ENCODE measurements at regions of chr19 and their contacts with region 1.

Region 1: DNA sequence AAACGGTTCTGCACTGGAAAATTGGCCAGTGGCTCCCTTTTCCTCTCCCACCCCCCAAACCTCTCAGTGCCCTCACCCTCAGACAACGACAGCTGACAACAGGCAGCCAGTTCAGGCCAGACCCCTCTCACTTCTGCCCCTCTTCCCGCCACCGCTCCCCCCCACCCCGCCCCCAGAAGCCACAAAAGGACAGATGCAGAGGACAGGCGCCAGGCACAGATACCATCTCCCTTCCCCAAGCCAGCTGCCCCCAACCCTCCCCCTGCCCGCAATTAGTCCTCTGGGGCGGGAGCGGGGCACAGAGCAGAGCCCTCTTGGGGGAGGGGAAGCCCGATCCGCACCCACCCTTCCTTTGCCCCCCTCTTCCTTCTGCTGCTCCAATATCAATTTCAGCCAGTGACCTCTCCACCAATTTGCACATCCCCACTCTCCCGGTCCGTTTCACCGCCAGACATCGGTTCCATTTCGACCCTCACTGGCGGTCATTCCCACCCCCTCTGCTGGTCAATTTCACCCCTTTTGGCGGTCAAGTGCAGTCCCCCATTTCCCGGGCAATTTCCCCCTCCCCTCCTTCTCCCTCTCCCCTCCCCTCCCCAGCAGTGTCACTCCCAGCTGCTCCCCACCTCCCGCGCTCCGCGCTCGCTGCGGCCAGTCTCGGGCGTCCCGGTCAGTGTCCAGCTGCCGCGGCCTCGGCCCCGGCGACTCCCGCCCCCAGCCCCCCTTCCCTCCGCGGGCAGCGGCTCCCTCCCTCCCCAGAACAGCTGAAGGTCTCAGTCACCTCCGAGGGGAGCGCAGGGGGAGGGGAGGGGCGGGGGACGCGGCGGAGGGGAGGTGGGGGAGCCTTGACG is at the start of gene SHD:
- DNase-seq: no peak
- H3K4me3 ChIP-seq: peak within 1 kb of the TSS in 3 of 4 donors; percentile 1 to 43 (median 28)
- H3K27ac ChIP-seq: no peak within 1 kb of the TSS
- H3K4me1 ChIP-seq: peaks cover 4 to 18% (median 13%) of the 10 kb centered on the region in 4 donors
- H3K27me3 ChIP-seq: peaks cover 65% of the 10 kb centered on the region
- CTCF ChIP-seq: no peak
- EP300 ChIP-seq: no peak
- POLR2A ChIP-seq: no peak
- total RNA-seq, gene SHD: 7.6 to 51.4 (median 27.5) TPM

Region 2: DNA sequence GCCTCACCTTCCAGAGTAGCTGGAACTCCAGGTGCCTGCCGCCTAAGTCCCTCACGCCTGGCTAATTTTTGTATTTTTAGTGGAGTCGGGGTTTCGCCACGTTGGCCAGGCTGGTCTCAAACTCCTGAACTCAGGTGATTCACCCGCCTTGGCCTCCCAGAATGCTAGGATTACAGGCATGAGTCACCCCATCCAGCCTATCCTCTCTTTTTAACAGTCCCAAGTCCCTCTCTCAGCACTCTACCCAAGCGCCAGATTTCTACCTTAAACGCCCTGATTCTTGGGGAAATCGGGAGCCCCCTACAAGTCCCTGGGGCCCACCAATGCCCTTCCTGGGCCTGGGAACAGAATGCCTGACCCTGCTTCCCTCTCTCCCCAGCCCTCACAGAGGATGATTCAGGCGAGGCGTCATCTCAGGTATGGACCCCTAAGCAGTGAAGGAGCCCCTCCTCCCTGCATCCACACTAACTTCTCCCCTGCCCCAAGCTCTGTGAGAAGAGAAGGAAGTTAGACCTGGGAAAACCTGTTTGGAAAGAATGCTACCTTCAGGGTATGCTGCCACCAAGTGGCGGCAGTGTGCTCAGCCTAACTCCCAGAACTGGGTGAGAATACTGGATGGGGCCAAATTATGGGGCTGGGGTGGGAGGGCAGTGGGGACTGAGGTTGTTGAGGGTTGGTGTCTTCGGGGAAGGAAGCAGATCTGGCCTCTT is 70.1 kb before region 1 on chr19:
- in situ Hi-C with region 1: no loop called
- intact Hi-C with region 1: no loop called
- DNase-seq: peak; percentile 40
- H3K4me3 ChIP-seq: no peak overlapping the region
- H3K27ac ChIP-seq: no peak overlapping the region
- H3K4me1 ChIP-seq: peaks cover 0 to 4% (median 1%) of the 10 kb centered on the region in 4 donors
- H3K27me3 ChIP-seq: peaks cover 13% of the 10 kb centered on the region
- CTCF ChIP-seq: peak in 4 of 5 experiments; percentile 12 to 41 (median 34)
- EP300 ChIP-seq: no peak
- POLR2A ChIP-seq: no peak

Region 3: DNA sequence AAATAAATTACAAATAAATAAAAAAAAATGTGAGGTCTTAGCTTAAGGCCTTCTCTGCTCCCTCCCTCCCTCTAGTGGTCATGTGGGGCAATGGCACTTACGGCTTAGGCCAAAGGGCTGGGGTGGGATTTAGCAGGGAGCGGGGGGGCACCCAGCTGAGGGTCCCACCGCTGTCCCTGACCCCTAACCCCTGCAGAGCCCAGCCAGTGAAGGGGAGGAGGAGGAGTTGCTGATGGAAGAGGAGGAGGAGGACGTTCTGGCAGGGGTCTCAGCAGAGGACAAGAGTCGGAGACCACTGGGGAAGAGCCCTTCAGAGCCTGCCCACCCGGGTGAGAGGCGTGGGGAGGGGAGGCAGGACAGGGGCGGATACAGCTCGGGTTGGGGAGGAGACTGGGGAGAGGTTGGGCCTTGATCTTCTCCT is 74.1 kb after region 1 on chr19:
- in situ Hi-C with region 1: loop called in 2 of 4 experiments (anchors 10 to 25 kb)
- intact Hi-C with region 1: no loop called
- DNase-seq: no peak
- H3K4me3 ChIP-seq: no peak overlapping the region
- H3K27ac ChIP-seq: no peak overlapping the region
- H3K4me1 ChIP-seq: no peaks in the 10 kb centered on the region
- H3K27me3 ChIP-seq: no peaks in the 10 kb centered on the region
- CTCF ChIP-seq: peak; percentile 83 to 95 (median 93)
- EP300 ChIP-seq: no peak
- POLR2A ChIP-seq: no peak

Region 4: GRCh38 chr19:5857203-5858081 is 1578.8 kb after region 1 on chr19:
- in situ Hi-C with region 1: no loop called
- intact Hi-C with region 1: no loop called
- DNase-seq: no peak
- H3K4me3 ChIP-seq: no peak overlapping the region
- H3K27ac ChIP-seq: no peak overlapping the region
- H3K4me1 ChIP-seq: no peaks in the 10 kb centered on the region
- H3K27me3 ChIP-seq: no peaks in the 10 kb centered on the region
- CTCF ChIP-seq: no peak
- EP300 ChIP-seq: no peak
- POLR2A ChIP-seq: no peak

Measured in transverse colon (tissue), 4 donors.